ENCODE measurements at regions of chr6 and their contacts with region 1.

Region 1: DNA sequence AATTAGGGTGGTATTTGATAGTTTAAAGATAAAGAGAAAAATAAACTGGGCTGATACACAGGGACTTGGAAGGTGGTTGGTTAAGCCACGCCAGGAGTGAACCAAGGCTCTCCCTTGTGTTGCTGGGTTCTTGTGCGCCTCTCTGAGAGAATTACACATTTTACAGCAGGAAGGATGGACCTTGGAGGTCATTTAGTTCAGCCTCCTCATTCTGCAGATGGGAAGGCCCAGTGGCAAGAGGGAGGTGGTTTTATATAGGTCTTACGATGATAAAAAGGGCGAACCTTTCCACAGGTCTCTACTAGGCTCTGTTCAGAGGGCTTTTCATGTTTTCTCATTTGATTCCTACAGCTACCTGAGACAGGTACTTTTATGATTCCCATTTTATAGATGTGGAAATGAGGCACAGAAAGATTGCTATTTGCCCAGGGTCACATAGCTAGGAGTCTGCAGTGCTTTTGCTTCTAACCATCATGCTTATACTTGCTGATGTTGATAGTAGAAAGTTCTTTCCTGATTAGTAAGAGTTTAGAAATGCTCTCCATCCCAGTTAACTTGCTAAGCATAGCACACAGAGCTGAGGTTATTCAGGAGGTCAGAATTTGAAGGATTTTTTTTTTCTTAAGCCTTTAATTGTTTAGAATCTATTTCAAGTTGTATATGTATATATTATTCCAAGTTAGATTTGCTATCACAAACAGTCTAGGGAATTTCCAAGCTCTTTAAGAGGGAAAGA is 12.8 kb downstream of the HIVEP1 start:
- DNase-seq: peak; percentile 76
- H3K4me3 ChIP-seq: no peak overlapping the region
- CTCF ChIP-seq: no peak

Region 2: DNA sequence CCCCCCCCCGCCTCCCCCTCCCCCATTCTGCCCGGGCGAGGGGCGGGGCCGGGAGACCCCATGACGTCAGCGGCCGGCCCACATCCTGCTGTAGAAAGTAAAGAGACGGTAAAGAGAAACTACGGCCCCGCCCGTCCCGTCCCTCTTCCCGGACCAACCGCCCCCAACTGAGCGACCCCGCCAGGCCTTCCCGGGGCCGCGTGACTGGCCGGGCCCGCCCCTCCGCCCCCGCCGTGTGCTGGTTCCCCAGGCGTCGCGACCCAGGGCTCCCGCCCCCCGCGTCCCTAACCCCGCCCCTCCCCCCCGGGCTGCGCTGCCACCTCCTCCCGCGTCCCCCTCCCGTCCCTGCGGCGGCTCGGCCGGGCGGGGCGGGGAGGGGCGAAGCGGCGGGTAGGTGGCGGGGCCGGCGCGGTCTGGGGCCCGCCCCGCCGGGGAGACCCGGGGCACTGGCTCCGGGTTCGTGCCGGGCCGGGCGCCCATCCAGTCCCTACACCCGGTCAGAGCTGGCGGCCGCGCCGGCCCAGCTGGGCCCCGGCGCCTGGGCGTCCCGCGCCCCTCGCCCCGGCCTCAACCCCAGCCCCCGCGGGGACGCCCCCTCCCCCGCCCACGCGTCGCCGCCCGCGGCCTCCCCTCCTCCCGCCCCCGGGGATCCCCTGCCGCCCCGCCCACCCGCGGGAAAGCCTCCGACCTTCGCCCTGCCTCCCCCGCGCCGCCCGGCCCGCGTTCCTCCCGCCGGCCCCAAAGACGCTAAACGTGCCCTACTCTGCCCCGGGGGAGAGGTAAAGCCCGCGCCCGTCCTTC is 13.4 kb before region 1 on chr6:
- CTCF ChIA-PET with region 1: interaction called, 14 read pairs
- POLR2A ChIA-PET with region 1: interaction called, 5 read pairs
- DNase-seq: peak; percentile 78
- H3K4me3 ChIP-seq: peak overlapping the region; percentile 91
- CTCF ChIP-seq: no peak